AG04450 (cell line): ENCODE measurements at regions of chr11 and their contacts with region 1.

Region 1: DNA sequence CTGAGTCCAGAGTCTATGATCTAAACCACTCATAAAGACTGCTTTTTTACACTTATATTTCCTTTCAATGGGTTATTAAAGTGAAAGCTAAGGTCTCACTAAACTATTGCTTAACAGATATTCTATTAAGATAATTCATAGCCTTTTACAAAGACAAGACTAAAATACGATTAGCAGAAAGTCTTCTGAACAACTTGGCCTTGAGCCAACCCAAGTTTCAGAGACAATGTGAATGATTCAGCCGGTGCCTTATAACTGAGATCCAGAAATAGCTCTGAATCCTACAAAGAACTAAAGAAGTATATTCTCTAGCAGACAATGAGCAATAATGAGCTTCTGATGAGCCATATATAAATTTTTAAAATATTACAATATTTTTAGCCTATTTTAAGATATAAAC is 41.5 kb upstream of the CARD18 start:
- DNase-seq: no peak
- H3K4me3 ChIP-seq: no peak overlapping the region
- H3K27ac ChIP-seq: no peak overlapping the region
- H3K27me3 ChIP-seq: no peaks in the 10 kb centered on the region
- CTCF ChIP-seq: no peak

Region 2: DNA sequence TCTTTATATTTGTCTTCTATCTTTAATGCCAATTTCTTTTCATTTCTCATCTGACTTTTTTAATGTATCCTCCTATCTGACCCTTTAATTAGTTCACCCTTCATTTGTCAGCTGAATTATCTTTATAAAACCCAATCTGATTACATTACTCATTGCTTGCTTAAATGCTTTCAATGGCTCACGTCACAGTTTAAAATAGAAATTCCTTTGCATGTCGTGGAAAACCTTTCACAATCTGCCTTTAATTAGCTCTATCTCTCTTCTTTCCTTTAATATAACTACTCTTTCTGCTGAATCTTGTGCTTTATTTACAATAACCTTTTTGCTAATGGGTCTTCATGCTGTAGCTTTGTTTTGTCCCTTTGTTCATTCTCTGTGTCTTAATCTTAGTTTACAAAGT is 1946.1 kb before region 1 on chr11:
- CTCF ChIA-PET with region 1: no interaction called
- POLR2A ChIA-PET with region 1: interaction called, 11 read pairs
- DNase-seq: peak; percentile 46
- H3K4me3 ChIP-seq: no peak overlapping the region
- H3K27ac ChIP-seq: no peak overlapping the region
- H3K27me3 ChIP-seq: no peaks in the 10 kb centered on the region
- CTCF ChIP-seq: no peak

Region 3: GRCh38 chr11:105057432-105057831 is 123.7 kb before region 1 on chr11:
- CTCF ChIA-PET with region 1: no interaction called
- POLR2A ChIA-PET with region 1: no interaction called
- DNase-seq: no peak
- H3K4me3 ChIP-seq: no peak overlapping the region
- H3K27ac ChIP-seq: no peak overlapping the region
- H3K27me3 ChIP-seq: no peaks in the 10 kb centered on the region
- CTCF ChIP-seq: no peak